AG04449 (cell line): ENCODE measurements at regions of chr15 and their contacts with region 1.

Region 1: GRCh38 chr15:100572362-100572983 is 29.5 kb downstream of the LINS1 start:
- DNase-seq: no peak
- H3K4me3 ChIP-seq: no peak overlapping the region
- CTCF ChIP-seq: no peak

Region 2: GRCh38 chr15:99928429-99928981 is 644.0 kb before region 1 on chr15:
- CTCF ChIA-PET with region 1: interaction called, 32 read pairs
- POLR2A ChIA-PET with region 1: no interaction called
- DNase-seq: no peak
- H3K4me3 ChIP-seq: peak overlapping the region; percentile 57
- CTCF ChIP-seq: peak; percentile 64

Region 3: DNA sequence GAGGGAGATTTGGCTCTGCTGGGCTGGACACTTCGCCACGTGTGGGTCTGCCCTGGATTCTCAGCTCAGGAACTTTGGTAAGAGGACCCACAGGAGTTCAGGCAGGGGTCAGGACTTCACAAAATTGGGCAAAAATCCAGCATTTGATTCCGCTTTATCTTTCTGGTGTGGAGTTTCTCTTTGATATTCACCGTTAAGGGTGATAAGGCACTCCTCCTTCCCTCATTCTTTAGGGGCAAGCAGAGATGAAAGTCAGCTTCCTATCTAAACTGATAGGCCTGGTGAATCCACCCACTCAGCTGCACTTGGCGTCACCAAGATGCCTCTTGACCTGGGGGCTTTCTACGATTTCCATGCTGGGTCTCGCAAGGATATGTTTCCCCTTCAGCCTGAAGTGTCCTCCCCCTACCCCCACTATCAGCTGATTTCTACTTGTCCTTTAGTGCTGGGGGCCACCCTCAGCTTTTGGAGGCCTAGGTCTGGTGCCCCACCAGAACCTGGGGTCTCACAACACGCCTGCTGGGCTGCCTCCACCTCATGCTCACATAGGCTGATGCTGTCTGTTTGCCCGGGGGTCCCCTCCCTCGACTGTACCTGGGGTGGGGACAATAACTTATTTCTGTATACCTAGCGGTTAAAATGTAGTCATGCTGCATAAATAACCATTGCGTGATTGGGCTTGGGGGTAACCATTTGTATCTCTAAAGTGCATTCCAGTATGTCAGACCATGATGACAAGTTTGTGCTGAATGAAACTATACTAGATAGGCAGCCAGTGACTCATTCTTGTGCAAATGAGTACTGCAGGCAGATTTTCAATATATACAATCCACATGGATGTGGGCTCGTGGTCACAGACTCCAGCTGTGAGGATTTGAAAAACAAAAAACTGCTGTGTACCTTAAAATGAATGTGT is 479.0 kb before region 1 on chr15:
- CTCF ChIA-PET with region 1: no interaction called
- POLR2A ChIA-PET with region 1: no interaction called
- DNase-seq: no peak
- H3K4me3 ChIP-seq: no peak overlapping the region
- CTCF ChIP-seq: no peak

Region 4: DNA sequence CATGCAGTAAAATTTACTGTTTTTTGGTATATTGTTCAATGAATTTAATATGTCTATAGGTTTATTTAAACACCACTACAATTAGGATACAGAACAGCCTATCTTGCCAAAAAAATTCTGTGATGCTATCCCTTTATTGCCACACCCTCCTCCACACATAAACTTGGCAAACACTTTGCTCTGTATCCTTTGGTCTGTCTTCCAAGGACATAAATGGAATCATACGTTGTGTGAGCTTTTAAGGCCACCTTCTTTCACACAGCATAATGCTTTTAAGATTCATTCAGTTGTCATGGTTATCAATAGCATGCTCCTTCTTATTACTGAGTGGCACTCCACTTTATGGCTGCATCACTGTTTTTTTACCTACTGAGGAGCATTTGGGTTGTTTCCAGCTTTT is 115.3 kb before region 1 on chr15:
- CTCF ChIA-PET with region 1: no interaction called
- POLR2A ChIA-PET with region 1: no interaction called
- DNase-seq: no peak
- H3K4me3 ChIP-seq: no peak overlapping the region
- CTCF ChIP-seq: no peak

Region 5: GRCh38 chr15:100588638-100589242 is 16.3 kb after region 1 on chr15:
- CTCF ChIA-PET with region 1: interaction called, 22 read pairs
- POLR2A ChIA-PET with region 1: no interaction called
- DNase-seq: no peak
- H3K4me3 ChIP-seq: no peak overlapping the region
- CTCF ChIP-seq: no peak